ENCODE measurements at regions of chr4 and their contacts with region 1.

Region 1: GRCh38 chr4:147866532-147867271 is 134.8 kb downstream of the ARHGAP10 start:
- DNase-seq: peak; percentile 95
- H3K4me3 ChIP-seq: no peak overlapping the region
- H3K27ac ChIP-seq: no peak overlapping the region
- H3K4me1 ChIP-seq: no peaks in the 10 kb centered on the region
- H3K27me3 ChIP-seq: no peaks in the 10 kb centered on the region
- CTCF ChIP-seq: peak; percentile 99

Region 2: DNA sequence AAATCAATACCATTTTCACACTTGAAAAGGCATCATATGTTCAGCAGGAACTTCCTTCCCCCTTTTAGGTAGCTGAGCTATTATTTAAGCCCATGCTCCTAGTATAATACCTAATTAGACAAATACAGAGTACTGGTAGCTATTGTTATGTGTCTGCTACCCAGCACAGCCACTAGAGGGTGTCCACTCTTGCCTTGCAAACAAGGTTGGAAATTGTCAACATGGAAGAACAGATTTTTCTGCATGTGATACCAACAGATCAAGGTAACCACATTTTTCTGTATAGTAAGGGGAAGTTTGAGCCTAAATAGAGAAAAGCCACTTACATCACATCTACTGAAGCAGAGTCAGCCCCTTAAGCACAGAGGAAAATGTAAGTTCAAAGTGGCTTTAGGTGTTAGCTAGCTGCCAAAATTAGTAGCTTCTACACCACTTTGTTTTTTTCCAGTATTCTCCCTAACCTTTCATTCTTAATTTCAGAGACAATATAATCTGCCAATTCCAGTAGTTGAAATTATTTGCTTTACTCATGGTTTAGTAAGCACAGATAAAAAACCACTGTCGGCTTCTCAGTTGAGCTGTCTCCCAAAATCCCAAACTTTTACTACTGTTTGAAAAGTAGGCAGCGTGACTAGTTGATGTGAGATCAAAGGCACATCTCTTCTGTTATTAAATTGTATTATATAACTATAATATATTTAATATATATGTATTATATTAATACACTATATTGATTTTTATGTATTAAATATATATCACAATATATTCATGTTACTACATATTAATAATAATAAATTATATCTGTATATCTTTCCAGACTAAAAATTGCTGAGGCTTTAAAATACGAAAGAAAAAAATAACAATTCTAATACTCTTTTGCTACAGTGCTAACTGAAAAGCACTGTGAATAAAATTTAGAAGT is 347.6 kb before region 1 on chr4:
- intact Hi-C with region 1: loop called (anchors 5 kb)
- DNase-seq: peak; percentile 33
- H3K4me3 ChIP-seq: no peak overlapping the region
- H3K27ac ChIP-seq: no peak overlapping the region
- H3K4me1 ChIP-seq: no peaks in the 10 kb centered on the region
- H3K27me3 ChIP-seq: no peaks in the 10 kb centered on the region
- CTCF ChIP-seq: peak; percentile 69

Region 3: DNA sequence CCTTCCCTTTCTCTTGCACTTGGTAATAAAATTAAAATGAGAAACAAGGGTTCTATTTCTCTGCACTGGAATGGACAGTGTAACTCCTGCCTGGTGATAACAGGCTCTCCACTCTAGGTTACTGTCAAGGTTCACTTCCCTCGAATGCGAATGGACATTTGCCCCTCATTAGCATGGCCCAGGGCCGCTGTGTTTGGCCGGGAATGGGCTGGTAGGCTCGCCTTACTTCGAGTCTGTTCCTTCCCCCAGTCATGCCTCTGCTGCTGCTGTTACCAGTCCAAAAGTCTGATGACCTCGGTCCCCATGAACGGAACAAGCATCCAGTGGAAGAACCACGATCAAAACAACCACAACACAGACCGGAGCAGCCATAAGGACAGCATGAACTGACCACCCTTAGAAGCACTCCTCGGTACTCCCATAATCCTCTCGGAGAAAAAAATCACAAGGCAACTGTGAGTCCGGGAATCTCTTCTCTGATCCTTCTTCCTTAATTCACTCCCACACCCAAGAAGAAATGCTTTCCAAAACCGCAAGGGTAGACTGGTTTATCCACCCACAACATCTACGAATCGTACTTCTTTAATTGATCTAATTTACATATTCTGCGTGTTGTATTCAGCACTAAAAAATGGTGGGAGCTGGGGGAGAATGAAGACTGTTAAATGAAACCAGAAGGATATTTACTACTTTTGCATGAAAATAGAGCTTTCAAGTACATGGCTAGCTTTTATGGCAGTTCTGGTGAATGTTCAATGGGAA is 324.3 kb before region 1 on chr4:
- intact Hi-C with region 1: no loop called
- DNase-seq: no peak
- H3K4me3 ChIP-seq: no peak overlapping the region
- H3K27ac ChIP-seq: no peak overlapping the region
- H3K4me1 ChIP-seq: no peaks in the 10 kb centered on the region
- H3K27me3 ChIP-seq: no peaks in the 10 kb centered on the region
- CTCF ChIP-seq: no peak

Region 4: GRCh38 chr4:147617173-147617840 is 249.4 kb before region 1 on chr4 and contains the start of gene TMEM184C:
- intact Hi-C with region 1: loop called (anchors 10 kb)
- DNase-seq: peak; percentile 99
- H3K4me3 ChIP-seq: peak within 1 kb of the TSS; percentile 60
- H3K27ac ChIP-seq: peak within 1 kb of the TSS; percentile 74
- H3K4me1 ChIP-seq: peaks cover 3% of the 10 kb centered on the region
- H3K27me3 ChIP-seq: no peaks in the 10 kb centered on the region
- CTCF ChIP-seq: no peak
- total RNA-seq, gene TMEM184C: 36.4 to 43.5 TPM

Region 5: DNA sequence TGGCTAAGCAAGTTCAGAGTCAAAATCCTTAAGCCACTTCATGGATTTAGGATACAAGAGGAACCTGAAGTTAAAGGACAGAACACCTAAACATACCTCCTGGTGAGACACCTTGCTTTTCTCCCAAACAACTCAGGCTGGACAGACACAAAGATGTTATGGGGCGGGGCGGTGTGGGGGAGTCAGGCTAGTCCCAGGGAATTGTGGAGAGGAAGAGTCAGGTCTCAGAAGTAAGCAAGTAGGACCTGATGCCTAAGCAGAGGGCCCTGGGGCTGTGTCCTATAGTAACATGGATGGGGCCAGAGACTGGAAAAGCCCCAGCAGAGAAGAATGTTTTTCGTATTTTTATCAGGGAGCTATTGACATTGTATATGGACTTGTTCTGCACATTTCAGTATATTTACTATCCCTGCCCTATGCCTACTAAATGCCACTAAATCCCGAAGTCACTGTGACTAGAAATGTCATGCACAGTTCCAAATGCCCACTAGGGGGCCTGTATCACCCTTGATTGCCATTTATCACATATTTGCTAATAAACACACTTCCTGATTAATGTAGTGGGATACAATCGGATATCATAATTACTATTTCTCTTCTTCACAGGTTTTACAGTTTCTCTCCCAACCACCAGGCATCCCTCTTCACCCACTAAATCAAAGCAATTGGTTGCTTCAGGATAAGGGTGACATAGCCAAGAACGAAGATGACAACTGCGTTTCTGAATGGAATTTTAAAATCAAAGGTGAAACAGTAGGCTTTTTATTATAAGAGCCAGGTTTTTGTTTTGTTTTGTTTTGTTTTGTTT is 158.6 kb before region 1 on chr4:
- intact Hi-C with region 1: loop called (anchors 2 kb)
- DNase-seq: peak; percentile 49
- H3K4me3 ChIP-seq: no peak overlapping the region
- H3K27ac ChIP-seq: no peak overlapping the region
- H3K4me1 ChIP-seq: no peaks in the 10 kb centered on the region
- H3K27me3 ChIP-seq: no peaks in the 10 kb centered on the region
- CTCF ChIP-seq: peak; percentile 84

Region 6: DNA sequence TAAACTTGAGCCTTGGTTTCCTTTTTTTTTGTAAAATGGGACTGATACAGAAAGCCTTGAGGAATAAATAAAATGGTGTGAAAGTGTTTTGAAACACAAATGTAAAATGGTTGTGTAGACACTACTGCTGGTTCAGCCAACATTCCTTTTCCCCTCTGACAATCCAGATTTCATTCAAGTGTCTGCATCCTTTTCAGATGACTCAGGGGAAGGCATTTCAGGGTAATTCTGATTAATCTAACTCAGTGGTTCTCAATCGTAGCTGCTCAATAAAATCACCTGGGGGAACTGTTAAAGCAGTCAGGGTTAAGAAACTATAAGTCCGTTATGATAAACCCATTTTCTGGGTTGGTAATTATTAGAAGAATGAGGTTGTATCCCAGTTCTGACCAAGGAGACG is 130.2 kb before region 1 on chr4:
- intact Hi-C with region 1: no loop called
- DNase-seq: no peak
- H3K4me3 ChIP-seq: no peak overlapping the region
- H3K27ac ChIP-seq: no peak overlapping the region
- H3K4me1 ChIP-seq: peaks cover 6% of the 10 kb centered on the region
- H3K27me3 ChIP-seq: no peaks in the 10 kb centered on the region
- CTCF ChIP-seq: no peak